Left cardiac atrium (tissue), 4 donors: ENCODE measurements at regions of chr14 and their contacts with region 1.

Region 1: DNA sequence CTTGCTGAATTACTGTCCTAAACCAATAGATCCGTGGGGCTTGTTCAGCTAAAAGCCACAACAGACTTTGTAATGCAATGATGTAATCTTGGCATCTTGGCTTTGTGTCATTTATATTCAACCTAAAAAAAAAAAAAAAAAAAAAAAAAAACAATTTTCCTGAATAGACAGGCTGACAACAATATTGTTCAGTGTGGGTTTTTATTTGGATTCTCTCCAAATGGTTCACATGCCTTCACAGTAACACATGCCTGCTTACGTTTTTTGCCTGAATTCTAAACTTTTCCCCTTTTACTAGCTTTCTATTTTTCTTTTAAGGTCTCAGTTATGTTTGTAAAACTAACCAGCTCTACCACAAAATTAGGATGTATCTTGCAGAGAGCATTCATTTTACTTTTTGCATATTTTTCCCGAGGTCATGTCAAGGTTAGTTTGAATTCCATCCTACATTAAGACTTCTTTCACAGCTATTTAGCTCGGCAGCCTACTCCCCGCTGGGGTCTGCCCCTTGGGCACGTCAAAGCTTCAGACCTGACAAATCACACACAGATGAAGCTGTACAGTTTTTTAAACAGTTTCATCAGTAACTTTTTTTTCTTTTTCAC is 213.7 kb upstream of the NPAS3 start:
- DNase-seq: no peak
- ATAC-seq: peak; percentile 57 to 67

Region 2: DNA sequence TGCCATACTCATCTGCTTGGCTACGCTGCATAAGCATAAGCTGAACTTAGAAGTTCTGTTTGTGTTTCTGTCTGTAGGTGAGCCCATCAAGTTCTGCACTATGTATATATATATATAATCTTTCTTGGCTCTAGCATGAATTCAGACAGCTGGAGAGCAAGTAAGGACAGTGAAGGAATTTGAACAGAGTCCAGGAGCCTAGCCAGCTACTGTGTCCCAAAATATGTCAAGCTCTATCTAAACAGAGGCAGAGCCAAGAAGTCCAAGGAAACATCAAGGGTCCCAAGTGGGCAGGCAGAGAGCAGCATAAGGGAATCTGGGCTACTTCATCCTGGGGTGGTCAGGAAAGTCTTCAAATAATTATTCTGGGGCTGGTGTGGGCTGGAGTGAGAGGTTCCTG is 95.2 kb after region 1 on chr14:
- intact Hi-C with region 1: loop called in 1 of 2 experiments (anchors 5 kb)
- DNase-seq: no peak
- ATAC-seq: peak; percentile 36 to 73

Region 3: GRCh38 chr14:32925439-32925838 is 200.5 kb after region 1 on chr14:
- intact Hi-C with region 1: no loop called
- DNase-seq: no peak
- ATAC-seq: no peak